Posterior vena cava (tissue), 2 donors: ENCODE measurements at regions of chr9 and their contacts with region 1.

Region 1: GRCh38 chr9:85155352-85155751 is 485.8 kb downstream of the NTRK2 start:
- DNase-seq: no peak

Region 2: GRCh38 chr9:84839541-84839940 is 315.8 kb before region 1 on chr9:
- intact Hi-C with region 1: no loop called
- DNase-seq: no peak

Region 3: DNA sequence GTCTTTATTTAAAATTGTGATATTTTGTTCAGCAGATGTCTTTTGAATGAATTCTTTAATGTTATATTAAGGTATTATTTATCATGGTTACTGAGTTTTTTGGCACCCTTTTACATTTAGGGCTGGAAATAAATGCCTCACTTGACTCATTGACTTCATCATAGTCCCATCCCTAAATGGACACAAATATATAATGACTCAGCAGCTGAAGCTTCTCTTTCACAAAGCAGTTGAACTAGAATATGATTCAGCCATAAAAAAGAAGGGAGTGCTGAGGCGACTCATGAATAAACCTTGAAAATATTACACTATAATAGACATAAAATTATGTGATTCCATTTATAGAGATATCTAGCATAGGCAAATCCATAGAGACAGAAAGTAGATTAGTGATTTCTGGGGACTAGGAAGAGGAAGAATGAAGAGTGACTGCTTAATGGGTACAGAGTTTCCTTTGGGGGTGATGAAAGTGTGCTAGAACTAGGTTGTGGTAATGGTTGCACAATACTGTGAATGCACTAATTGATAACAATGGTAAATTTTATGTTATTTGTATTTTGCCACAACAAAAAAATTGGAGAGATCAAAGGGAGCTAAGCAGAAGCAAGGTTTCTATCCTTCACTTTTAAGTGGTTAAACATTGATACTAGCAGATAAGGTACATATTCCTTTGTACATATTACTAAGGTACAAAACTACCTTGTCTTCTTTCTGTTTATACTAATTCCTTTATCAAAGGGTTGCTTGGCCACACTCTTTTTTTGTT is 36.2 kb before region 1 on chr9:
- intact Hi-C with region 1: loop called in 1 of 2 experiments (anchors 1 kb)
- DNase-seq: no peak